ENCODE measurements at regions of chr15 and their contacts with region 1.

Region 1: DNA sequence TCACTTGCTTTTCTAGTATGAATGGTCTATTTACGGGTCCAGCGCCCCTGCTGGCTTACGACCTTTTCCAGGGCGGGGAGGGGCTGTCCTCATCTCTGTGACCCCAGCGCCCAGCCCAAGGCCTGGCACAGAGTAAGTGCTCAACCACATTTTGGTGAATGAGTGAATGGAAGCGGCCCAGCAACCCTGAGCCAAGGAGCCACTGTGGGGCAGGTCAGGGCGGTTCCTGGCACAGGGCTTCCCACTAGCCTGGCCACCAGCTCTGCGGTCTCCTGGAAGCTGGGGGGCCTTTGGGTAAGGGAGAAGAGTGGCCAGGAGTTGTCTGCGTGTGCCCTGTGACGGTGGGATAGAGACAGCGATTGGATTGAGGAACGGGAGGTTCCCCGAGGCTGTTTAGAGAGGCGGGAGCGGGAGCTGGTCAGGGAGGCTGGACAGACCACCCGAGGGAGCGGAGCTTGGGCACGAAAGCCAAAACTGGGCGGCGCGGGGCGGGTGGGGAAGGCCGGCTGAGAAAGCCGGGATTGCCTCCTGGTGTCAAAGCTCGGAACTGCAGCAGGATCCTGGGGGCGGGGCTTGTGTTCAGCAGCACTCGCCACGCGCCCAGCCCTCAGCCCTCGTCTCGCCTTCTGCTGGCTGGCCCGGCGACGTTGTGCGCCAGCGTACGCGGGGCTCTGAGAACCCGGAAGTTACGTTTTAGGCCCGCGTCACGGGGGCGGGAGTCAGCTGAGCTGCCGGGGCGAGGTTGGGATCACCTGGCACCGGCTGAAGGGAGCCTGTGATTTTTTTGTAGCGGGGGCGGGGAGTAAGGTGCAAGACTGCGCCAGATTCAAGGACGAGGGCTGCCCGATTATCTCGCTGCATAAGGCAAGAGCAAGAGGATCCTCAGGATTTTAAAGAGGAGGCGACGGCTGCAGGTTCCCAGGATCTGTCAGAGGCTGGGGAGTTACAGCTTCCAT is at the start of gene VPS18:
- DNase-seq: peak; percentile 99
- ATAC-seq: peak; percentile 99
- H3K4me3 ChIP-seq: peak within 1 kb of the TSS; percentile 81 to 98 (median 92)
- H3K4me3 Mint-ChIP-seq: peak within 1 kb of the TSS; percentile 99
- H3K27ac ChIP-seq: peak within 1 kb of the TSS; percentile 84 to 91
- H3K27ac Mint-ChIP-seq: peak within 1 kb of the TSS; percentile 94
- H3K4me1 ChIP-seq: peaks cover 18 to 19% of the 10 kb centered on the region in 2 donors
- H3K4me1 Mint-ChIP-seq: peaks cover 28% of the 10 kb centered on the region
- H3K27me3 ChIP-seq: no peaks in the 10 kb centered on the region
- H3K27me3 Mint-ChIP-seq: no peaks in the 10 kb centered on the region
- CTCF ChIP-seq: peak; percentile 88
- total RNA-seq, gene VPS18: 29.6 TPM in 2 replicates

Region 2: DNA sequence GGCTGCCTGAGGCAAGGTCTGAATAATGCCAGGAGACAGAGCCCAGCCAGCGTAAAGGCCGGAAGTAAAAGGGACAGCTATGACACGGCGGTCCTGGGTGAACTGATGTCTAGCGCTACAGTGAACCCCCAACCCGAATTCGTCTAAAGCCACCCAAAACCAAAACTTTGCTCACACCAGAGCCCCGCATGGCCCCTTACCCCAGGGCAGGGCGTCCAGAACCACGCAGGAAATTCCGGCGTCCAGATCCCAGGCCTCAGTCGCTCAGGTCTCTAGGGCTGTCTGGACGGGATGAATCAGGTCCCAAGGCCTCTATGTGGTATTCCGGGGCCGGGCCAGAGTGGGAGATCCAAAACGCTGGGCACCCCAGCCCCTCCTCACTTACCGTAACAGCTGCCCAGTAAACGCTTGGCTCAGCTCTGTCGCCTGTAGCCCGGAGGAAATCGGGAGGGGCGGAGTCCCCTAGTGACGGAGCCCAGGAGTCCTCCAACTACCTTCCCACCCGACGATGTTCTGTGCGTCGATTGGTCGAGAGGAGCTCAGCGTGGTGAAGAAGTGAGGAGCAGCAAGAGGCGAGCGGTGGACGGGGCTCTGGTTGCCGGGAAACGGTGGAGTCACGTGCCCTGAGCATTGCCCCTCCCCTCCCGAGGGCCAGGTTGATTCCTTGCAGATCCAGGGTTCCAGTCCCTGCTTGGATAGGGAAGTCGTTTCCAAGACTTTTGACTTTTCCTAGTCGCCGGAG is 329.2 kb before region 1 on chr15 and contains the start of gene CCDC32:
- CTCF ChIA-PET with region 1: no interaction called
- POLR2A ChIA-PET with region 1: interaction called, 3 read pairs
- intact Hi-C with region 1: loop called (anchors 5 kb)
- DNase-seq: peak; percentile 96
- ATAC-seq: peak; percentile 90
- H3K4me3 ChIP-seq: peak within 1 kb of the TSS; percentile 81 to 100 (median 89)
- H3K4me3 Mint-ChIP-seq: peak within 1 kb of the TSS; percentile 82
- H3K27ac ChIP-seq: peak within 1 kb of the TSS; percentile 87 to 97
- H3K27ac Mint-ChIP-seq: peak within 1 kb of the TSS; percentile 86
- H3K4me1 ChIP-seq: peaks cover 50 to 55% of the 10 kb centered on the region in 2 donors
- H3K4me1 Mint-ChIP-seq: peaks cover 62% of the 10 kb centered on the region
- H3K27me3 ChIP-seq: no peaks in the 10 kb centered on the region
- H3K27me3 Mint-ChIP-seq: no peaks in the 10 kb centered on the region
- CTCF ChIP-seq: no peak
- total RNA-seq, gene CCDC32: 76.6 and 78.4 TPM in 2 replicates

Region 3: DNA sequence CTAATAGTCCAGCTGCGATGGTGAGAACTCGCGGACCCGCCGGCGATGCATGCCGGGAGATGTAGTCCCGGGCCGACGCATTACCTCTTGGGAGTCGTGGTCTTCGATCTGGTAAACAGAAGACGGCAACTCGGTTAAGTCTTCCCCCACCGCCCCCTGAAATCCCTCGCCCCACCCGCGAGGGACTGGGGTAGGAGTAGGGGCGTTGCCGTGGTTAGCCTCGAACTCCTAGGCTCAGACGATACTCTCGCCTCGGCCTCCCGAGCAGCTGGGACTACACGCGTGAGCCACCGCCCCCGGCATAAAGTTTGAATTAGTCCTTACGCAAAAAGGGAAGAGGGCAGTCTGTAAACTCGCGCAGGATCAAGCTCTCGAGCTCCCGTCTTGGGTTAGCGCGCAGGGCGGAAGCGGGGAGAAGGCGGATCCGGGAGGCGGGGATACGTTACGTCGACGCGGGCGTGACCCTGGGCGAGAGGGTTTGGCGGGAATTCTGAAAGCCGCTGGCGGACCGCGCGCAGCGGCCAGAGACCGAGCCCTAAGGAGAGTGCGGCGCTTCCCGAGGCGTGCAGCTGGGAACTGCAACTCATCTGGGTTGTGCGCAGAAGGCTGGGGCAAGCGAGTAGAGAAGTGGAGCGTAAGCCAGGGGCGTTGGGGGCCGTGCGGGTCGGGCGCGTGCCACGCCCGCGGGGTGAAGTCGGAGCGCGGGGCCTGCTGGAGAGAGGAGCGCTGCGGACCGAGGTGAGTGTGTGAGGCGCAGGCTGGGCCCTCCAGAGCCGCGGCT is 199.1 kb before region 1 on chr15 and contains the start of gene RAD51:
- CTCF ChIA-PET with region 1: interaction called, 12 read pairs
- POLR2A ChIA-PET with region 1: interaction called, 5 read pairs
- intact Hi-C with region 1: loop called (anchors 1 kb)
- DNase-seq: peak; percentile 96
- ATAC-seq: peak; percentile 88
- H3K4me3 ChIP-seq: peak within 1 kb of the TSS; percentile 84 to 100 (median 87)
- H3K4me3 Mint-ChIP-seq: peak within 1 kb of the TSS; percentile 100
- H3K27ac ChIP-seq: peak within 1 kb of the TSS; percentile 93 to 94
- H3K27ac Mint-ChIP-seq: peak within 1 kb of the TSS; percentile 99
- H3K4me1 ChIP-seq: peaks cover 7 to 18% of the 10 kb centered on the region in 2 donors
- H3K4me1 Mint-ChIP-seq: peaks cover 25% of the 10 kb centered on the region
- H3K27me3 ChIP-seq: no peaks in the 10 kb centered on the region
- H3K27me3 Mint-ChIP-seq: no peaks in the 10 kb centered on the region
- CTCF ChIP-seq: no peak
- total RNA-seq, gene RAD51: 1.9 and 2.0 TPM in 2 replicates

Region 4: GRCh38 chr15:40782580-40783227 is 111.3 kb before region 1 on chr15:
- CTCF ChIA-PET with region 1: interaction called, 11 read pairs
- POLR2A ChIA-PET with region 1: no interaction called
- intact Hi-C with region 1: no loop called
- DNase-seq: peak; percentile 84
- ATAC-seq: peak; percentile 98
- H3K4me3 ChIP-seq: no peak overlapping the region
- H3K4me3 Mint-ChIP-seq: no peak overlapping the region
- H3K27ac ChIP-seq: no peak overlapping the region
- H3K27ac Mint-ChIP-seq: peak overlapping the region; percentile 43
- H3K4me1 ChIP-seq: peaks cover 7% of the 10 kb centered on the region in 2 donors
- H3K4me1 Mint-ChIP-seq: peaks cover 16% of the 10 kb centered on the region
- H3K27me3 ChIP-seq: no peaks in the 10 kb centered on the region
- H3K27me3 Mint-ChIP-seq: no peaks in the 10 kb centered on the region
- CTCF ChIP-seq: peak; percentile 90

Region 5: DNA sequence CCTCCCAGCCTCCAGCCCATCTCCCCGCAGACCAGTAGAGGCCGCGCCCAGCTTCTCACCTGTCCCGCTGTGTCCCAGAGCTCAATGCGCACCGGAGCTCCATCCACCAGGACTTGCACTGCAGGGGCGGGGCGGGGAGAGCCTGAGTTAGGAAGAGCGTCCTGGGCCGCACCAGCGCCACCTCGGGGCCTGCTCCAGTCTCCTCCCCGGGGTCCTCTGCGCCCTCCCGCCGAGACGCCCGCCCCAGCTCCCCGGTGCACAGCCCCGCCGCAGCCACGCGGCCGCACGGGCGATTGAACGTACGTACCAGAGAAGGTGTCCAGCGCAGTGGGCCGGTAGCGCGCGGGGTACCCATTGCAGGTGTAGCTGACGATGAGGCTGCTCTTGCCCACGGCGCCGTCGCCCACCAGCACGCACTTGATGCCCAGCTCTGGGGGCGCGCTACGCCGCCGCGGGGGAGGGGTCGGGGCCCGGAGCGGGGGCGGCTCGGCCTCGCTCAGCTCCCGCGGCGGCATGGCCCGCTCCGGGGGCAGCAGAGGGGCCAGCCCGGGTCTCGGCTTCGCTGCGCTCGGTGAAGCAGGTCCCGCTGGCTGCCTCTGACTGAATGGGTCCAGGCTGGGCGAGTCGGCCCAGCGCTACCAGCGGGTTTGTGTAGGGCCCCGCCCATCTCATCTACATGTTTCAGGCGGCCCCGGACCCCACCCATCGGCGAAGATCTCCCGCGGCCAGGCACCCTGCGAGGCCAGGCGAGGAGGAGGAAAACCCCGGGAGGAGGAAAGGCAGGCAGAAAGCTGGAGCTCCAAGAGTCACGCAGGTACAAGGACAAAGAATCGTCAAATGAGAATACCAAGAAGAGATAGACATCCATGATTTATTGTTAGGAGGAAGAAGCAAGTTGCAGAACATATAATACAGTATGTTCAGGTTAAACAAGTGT is 20.1 kb before region 1 on chr15 and contains the start of gene RHOV:
- CTCF ChIA-PET with region 1: interaction called, 10 read pairs
- POLR2A ChIA-PET with region 1: interaction called, 3 read pairs
- intact Hi-C with region 1: loop called (anchors 2 kb)
- DNase-seq: peak; percentile 72
- ATAC-seq: peak; percentile 84
- H3K4me3 ChIP-seq: peak within 1 kb of the TSS; percentile 8 to 61 (median 53)
- H3K4me3 Mint-ChIP-seq: peak within 1 kb of the TSS; percentile 89
- H3K27ac ChIP-seq: no peak within 1 kb of the TSS
- H3K27ac Mint-ChIP-seq: no peak within 1 kb of the TSS
- H3K4me1 ChIP-seq: peaks cover 6 to 11% of the 10 kb centered on the region in 2 donors
- H3K4me1 Mint-ChIP-seq: peaks cover 25% of the 10 kb centered on the region
- H3K27me3 ChIP-seq: peaks cover 0 to 17% (median 0%) of the 10 kb centered on the region in 4 experiments
- H3K27me3 Mint-ChIP-seq: peaks cover 6% of the 10 kb centered on the region
- CTCF ChIP-seq: peak; percentile 34
- total RNA-seq, gene RHOV: 0.41 and 0.54 TPM in 2 replicates

Region 6: GRCh38 chr15:41116116-41116871 is 222.3 kb after region 1 on chr15 and contains the start of gene INO80:
- CTCF ChIA-PET with region 1: interaction called, 3 read pairs
- POLR2A ChIA-PET with region 1: no interaction called
- intact Hi-C with region 1: loop called (anchors 1 kb)
- DNase-seq: peak; percentile 98
- ATAC-seq: peak; percentile 66
- H3K4me3 ChIP-seq: peak within 1 kb of the TSS; percentile 73 to 92 (median 80)
- H3K4me3 Mint-ChIP-seq: peak within 1 kb of the TSS; percentile 100
- H3K27ac ChIP-seq: peak within 1 kb of the TSS; percentile 93
- H3K27ac Mint-ChIP-seq: peak within 1 kb of the TSS; percentile 100
- H3K4me1 ChIP-seq: peaks cover 16 to 17% of the 10 kb centered on the region in 2 donors
- H3K4me1 Mint-ChIP-seq: peaks cover 26% of the 10 kb centered on the region
- H3K27me3 ChIP-seq: no peaks in the 10 kb centered on the region
- H3K27me3 Mint-ChIP-seq: no peaks in the 10 kb centered on the region
- CTCF ChIP-seq: no peak
- total RNA-seq, gene INO80: 55.7 and 57.8 TPM in 2 replicates